ENCODE measurements at regions of chr4 and their contacts with region 1.

Region 1: GRCh38 chr4:3480528-3481112 is 17.5 kb downstream of the DOK7 start:
- DNase-seq: peak; percentile 47 to 67
- ATAC-seq: peak; percentile 37 to 85
- H3K4me3 ChIP-seq: no peak overlapping the region
- H3K27ac ChIP-seq: peak overlapping the region in 1 of 2 experiments; percentile 60; a peak in 2 of 6 replicates
- H3K4me1 ChIP-seq: peaks cover 33% of the 10 kb centered on the region
- CTCF ChIP-seq: peak; percentile 67
- EP300 ChIP-seq: no peak
- POLR2A ChIP-seq: no peak
- RAD21 ChIP-seq: peak; percentile 67 to 71

Region 2: GRCh38 chr4:3346146-3346545 is 134.5 kb before region 1 on chr4:
- CTCF ChIA-PET with region 1: interaction called, 28 read pairs
- POLR2A ChIA-PET with region 1: no interaction called
- DNase-seq: peak; percentile 60 to 63
- ATAC-seq: peak; percentile 85 to 92
- H3K4me3 ChIP-seq: no peak overlapping the region
- H3K27ac ChIP-seq: peak overlapping the region in 1 of 2 experiments; percentile 20; a peak in 1 of 6 replicates
- H3K4me1 ChIP-seq: peaks cover 20% of the 10 kb centered on the region
- CTCF ChIP-seq: peak; percentile 72
- EP300 ChIP-seq: no peak
- POLR2A ChIP-seq: no peak
- RAD21 ChIP-seq: peak; percentile 73 to 80

Region 3: DNA sequence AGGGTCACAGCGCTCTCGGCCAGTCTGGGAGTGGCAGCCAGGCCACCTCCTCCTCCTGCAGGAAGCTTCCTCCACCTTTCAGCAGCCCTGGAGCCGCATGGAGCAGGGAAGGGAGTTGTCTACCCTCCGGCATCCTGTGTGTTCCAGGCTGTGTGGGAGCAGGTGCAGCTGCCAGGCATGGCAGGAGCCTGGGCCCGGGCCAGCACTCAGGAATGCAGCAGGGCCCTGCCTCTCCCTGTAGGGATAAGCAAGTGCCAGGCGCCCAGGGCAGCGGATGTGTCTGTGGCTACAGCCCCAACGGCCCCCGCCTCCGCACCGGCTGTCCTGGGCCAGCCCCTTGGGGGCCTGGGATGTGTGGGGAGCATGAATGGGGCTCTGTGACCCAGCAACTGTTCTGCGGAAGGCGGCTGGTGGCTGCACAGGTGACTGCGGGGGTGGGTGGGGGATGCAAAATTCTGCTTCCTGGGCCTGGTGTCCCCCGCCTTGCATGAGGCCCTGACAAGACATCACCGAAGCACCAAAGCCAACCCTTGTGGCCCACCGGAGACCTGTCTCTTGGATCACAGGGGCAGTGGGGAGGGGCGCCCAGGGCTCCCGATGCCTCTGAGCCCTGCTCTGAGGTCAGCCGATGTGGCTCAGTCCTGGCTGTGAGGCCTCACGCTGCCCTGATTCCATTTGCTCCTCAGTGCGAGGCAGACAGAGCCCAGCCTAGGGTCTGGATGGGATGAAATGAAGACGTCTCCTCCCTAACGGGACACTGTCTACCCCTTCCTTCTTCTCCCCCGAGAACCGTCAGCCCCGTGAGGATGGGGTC is 18.9 kb before region 1 on chr4:
- CTCF ChIA-PET with region 1: interaction called, 13 read pairs
- POLR2A ChIA-PET with region 1: no interaction called
- DNase-seq: no peak
- ATAC-seq: no peak
- H3K4me3 ChIP-seq: no peak overlapping the region
- H3K27ac ChIP-seq: no peak overlapping the region
- H3K4me1 ChIP-seq: no peaks in the 10 kb centered on the region
- CTCF ChIP-seq: no peak
- EP300 ChIP-seq: no peak
- POLR2A ChIP-seq: no peak
- RAD21 ChIP-seq: no peak

Region 4: DNA sequence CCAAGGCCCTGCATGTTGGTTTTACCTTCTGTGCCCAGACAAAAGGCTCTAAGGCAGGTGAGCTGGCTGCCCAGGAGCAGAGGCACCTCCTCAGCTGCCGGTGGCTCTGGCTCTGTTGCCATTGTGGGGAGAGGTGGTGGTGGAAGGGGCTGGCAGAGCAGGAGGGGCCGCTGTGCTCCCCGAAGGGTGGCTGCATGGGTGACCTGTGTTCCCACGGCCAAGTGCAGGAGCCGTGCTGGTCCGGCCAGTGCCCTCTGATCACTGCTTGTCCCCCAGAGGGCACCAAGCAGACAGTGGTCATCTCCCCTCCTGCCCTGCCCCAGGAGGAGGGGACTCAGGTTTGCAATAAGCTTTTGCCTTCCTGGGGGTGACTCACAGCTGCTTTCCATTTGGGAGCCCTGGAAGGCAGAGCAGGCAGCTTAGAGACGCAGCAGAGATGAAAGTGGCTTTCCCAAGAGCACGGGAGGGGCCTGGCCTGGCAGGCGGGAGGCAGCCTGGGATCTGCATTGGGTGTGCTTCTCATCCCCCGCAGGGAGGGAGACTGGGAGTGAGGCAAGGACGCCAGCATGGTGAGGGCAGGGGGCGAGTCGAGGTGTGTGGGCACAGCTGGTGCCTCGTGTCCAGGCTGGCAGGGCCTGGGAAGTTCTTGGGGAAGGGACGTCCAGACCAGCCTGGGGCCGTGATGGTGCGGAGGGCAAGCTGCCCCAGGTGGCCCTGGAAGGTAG is 11.2 kb after region 1 on chr4:
- CTCF ChIA-PET with region 1: interaction called, 13 read pairs
- POLR2A ChIA-PET with region 1: no interaction called
- DNase-seq: no peak
- ATAC-seq: no peak
- H3K4me3 ChIP-seq: no peak overlapping the region
- H3K27ac ChIP-seq: no peak overlapping the region
- H3K4me1 ChIP-seq: no peaks in the 10 kb centered on the region
- CTCF ChIP-seq: no peak
- EP300 ChIP-seq: no peak
- POLR2A ChIP-seq: no peak
- RAD21 ChIP-seq: no peak

Measured in A549 (cell line).